Posterior vena cava (tissue), 2 donors: ENCODE measurements at regions of chr1 and their contacts with region 1.

Region 1: GRCh38 chr1:65792669-65793358 is at the start of gene PDE4B:
- DNase-seq: peak; percentile 80
- total RNA-seq, gene PDE4B: 14.0 to 17.1 TPM

Region 2: GRCh38 chr1:65813956-65814355 is 21.1 kb after region 1 on chr1:
- intact Hi-C with region 1: loop called in 1 of 2 experiments (anchors 1 kb)
- DNase-seq: no peak